HepG2 (cell line): ENCODE measurements at regions of chr11 and their contacts with region 1.

Region 1: DNA sequence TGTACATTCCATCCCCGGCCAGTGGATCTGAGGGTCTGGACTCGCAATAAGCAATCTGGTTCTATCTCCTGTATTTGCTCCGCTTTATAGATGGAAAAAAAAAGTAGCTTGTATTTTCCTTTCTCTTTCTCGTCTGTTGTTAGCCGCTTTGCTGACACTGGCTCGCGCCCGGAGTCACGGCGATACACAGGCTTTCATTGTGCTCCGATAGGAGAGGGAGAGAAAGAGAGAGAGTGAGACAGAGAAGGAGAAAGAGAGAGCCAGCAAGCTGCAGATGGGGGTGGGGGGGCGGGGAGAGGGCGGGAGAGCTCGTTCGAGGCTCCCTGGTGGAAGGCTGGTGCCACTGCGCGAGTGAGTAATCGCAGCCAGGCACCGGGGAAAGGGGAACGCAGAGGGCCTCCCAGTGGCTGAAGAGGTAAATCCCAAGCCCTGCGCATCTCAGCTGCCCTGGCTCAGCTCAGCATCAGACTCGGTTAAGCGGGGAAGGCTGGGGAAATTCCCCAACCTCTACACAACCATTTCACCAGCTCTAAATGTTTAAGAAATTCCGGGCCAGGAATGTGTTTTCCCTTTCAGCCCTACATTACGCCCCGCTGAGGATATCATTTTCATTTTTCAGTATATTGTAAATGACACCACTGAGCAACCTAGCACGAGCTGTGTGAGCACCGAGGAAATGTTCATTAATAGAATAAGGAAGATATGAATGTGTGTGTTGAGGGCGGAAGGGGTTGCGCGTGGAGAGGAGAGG is at the start of gene MAML2:
- DNase-seq: peak; percentile 83
- ATAC-seq: peak; percentile 95
- H3K4me3 ChIP-seq: peak within 1 kb of the TSS; percentile 77 to 84 (median 80)
- H3K27ac ChIP-seq: peak within 1 kb of the TSS; percentile 80
- H3K4me1 ChIP-seq: peaks cover 42% of the 10 kb centered on the region
- H3K27me3 ChIP-seq: no peaks in the 10 kb centered on the region; a peak in 1 of 5 replicates
- CTCF ChIP-seq: peak; percentile 92
- EP300 ChIP-seq: no peak
- POLR2A ChIP-seq: no peak
- RAD21 ChIP-seq: peak; percentile 92
- total RNA-seq, gene MAML2: 2.3 and 2.9 TPM in 2 replicates

Region 2: GRCh38 chr11:95849087-95849825 is 493.9 kb before region 1 on chr11:
- CTCF ChIA-PET with region 1: no interaction called
- POLR2A ChIA-PET with region 1: interaction called, 4 read pairs
- in situ Hi-C with region 1: no loop called
- intact Hi-C with region 1: loop called (anchors 1 kb)
- DNase-seq: peak; percentile 64
- ATAC-seq: peak; percentile 97
- H3K4me3 ChIP-seq: no peak overlapping the region
- H3K27ac ChIP-seq: no peak overlapping the region
- H3K4me1 ChIP-seq: no peaks in the 10 kb centered on the region
- H3K27me3 ChIP-seq: no peaks in the 10 kb centered on the region
- CTCF ChIP-seq: peak; percentile 75
- EP300 ChIP-seq: no peak
- POLR2A ChIP-seq: no peak
- RAD21 ChIP-seq: no peak

Region 3: DNA sequence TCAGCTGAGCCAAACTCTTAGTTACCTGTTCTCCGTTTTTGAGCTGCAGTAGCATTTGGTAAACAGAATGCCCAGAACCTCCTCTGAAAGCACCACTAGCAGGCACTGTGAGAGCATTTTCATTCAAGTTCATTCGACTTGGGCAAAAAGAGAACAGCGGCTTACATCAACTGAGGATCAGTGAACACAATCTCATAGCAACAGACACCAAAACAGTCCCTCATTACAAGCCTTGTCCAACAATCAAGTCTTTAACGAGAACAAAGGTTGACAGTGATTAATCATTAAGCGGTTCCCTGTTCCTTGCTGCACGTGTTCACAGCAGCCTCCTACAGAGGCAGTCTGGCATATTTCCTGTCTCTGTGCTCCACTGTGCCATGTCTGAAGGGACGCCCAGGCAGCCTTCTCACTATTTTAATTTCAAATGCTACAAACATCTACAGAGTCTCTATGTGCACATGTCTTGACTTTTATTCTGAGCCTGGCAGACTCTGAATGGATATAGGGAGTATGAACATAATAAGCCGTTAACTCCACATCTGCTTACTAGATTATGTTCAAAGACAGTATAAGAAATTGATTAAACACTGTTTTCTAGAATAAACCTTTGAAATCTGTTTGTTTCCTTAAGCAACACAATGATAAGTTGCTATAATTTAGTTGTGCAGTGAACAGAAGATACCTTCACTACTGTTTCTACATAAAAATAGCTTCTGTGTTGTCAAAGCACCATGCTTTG is 330.9 kb before region 1 on chr11:
- CTCF ChIA-PET with region 1: interaction called, 7 read pairs
- POLR2A ChIA-PET with region 1: interaction called, 5 read pairs
- in situ Hi-C with region 1: loop called (anchors 10 kb)
- intact Hi-C with region 1: loop called (anchors 1 kb)
- DNase-seq: peak; percentile 99
- ATAC-seq: peak; percentile 91
- H3K4me3 ChIP-seq: no peak overlapping the region
- H3K27ac ChIP-seq: peak overlapping the region; percentile 97
- H3K4me1 ChIP-seq: peaks cover 80% of the 10 kb centered on the region
- H3K27me3 ChIP-seq: no peaks in the 10 kb centered on the region
- CTCF ChIP-seq: peak; percentile 92
- EP300 ChIP-seq: peak; percentile 87 to 95; a peak in 3 of 4 replicates
- POLR2A ChIP-seq: peak; percentile 32 to 56; a peak in 2 of 4 replicates
- RAD21 ChIP-seq: peak; percentile 88

Region 4: DNA sequence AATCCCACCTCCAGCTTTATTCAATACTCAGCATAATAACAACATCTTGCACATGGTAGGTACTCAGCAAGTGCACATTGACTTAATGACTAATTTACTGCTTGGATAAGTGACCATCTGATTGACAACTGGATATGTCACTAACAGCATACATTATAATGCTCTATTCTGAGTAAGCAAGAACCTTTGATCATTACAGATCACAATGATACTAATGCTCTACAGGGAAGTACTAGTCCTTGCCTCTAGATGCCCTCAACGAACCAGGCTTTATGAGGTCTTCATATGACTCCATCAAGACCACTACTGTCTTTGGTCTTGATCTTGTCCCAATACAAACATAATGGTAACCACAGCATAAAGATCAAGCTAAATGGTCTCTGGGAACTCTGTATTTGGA is 251.7 kb before region 1 on chr11:
- CTCF ChIA-PET with region 1: no interaction called
- POLR2A ChIA-PET with region 1: no interaction called
- in situ Hi-C with region 1: no loop called
- intact Hi-C with region 1: loop called (anchors 2 kb)
- DNase-seq: peak; percentile 18
- ATAC-seq: peak; percentile 53
- H3K4me3 ChIP-seq: no peak overlapping the region
- H3K27ac ChIP-seq: peak overlapping the region; percentile 47
- H3K4me1 ChIP-seq: peaks cover 43% of the 10 kb centered on the region
- H3K27me3 ChIP-seq: no peaks in the 10 kb centered on the region
- CTCF ChIP-seq: peak; percentile 14; the same call in 1 of the 2 replicates
- EP300 ChIP-seq: no peak
- POLR2A ChIP-seq: no peak
- RAD21 ChIP-seq: no peak

Region 5: DNA sequence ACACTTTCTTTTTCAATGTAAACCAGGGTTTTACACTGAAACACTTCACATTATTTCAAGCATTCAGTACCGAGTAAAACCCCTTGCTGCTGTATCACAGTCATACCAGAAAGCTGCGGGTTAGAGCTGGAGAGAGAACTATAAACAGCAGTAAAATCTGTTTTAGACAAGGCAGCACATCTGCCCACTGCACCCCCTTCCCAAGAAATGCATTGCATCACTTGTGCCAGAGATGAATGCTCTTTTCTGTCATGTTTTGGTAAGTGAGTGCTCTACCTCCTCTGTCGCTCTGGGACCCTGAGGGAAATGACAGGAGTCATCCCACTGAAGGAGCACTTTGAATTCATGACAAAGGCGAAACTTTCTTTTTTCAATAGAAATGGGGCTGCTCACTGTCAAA is 107.4 kb before region 1 on chr11:
- CTCF ChIA-PET with region 1: no interaction called
- POLR2A ChIA-PET with region 1: interaction called, 10 read pairs
- in situ Hi-C with region 1: no loop called
- intact Hi-C with region 1: loop called (anchors 5 kb)
- DNase-seq: no peak
- ATAC-seq: no peak
- H3K4me3 ChIP-seq: no peak overlapping the region
- H3K27ac ChIP-seq: no peak overlapping the region
- H3K4me1 ChIP-seq: peaks cover 51% of the 10 kb centered on the region
- H3K27me3 ChIP-seq: no peaks in the 10 kb centered on the region
- CTCF ChIP-seq: no peak
- EP300 ChIP-seq: no peak
- POLR2A ChIP-seq: no peak
- RAD21 ChIP-seq: no peak

Region 6: GRCh38 chr11:96331699-96332116 is 11.4 kb before region 1 on chr11:
- CTCF ChIA-PET with region 1: interaction called, 3 read pairs
- POLR2A ChIA-PET with region 1: interaction called, 54 read pairs
- in situ Hi-C with region 1: no loop called
- intact Hi-C with region 1: no loop called
- DNase-seq: no peak
- ATAC-seq: peak; percentile 44; the same call in 2 of the 3 replicates
- H3K4me3 ChIP-seq: peak overlapping the region in 2 of 3 experiments; percentile 17 to 42; a peak in 2 of 6 replicates
- H3K27ac ChIP-seq: peak overlapping the region; percentile 86
- H3K4me1 ChIP-seq: peaks cover 77% of the 10 kb centered on the region
- H3K27me3 ChIP-seq: no peaks in the 10 kb centered on the region
- CTCF ChIP-seq: no peak
- EP300 ChIP-seq: no peak
- POLR2A ChIP-seq: no peak
- RAD21 ChIP-seq: no peak